T-cell (primary cell): ENCODE measurements at regions of chr12 and their contacts with region 1.

Region 1: DNA sequence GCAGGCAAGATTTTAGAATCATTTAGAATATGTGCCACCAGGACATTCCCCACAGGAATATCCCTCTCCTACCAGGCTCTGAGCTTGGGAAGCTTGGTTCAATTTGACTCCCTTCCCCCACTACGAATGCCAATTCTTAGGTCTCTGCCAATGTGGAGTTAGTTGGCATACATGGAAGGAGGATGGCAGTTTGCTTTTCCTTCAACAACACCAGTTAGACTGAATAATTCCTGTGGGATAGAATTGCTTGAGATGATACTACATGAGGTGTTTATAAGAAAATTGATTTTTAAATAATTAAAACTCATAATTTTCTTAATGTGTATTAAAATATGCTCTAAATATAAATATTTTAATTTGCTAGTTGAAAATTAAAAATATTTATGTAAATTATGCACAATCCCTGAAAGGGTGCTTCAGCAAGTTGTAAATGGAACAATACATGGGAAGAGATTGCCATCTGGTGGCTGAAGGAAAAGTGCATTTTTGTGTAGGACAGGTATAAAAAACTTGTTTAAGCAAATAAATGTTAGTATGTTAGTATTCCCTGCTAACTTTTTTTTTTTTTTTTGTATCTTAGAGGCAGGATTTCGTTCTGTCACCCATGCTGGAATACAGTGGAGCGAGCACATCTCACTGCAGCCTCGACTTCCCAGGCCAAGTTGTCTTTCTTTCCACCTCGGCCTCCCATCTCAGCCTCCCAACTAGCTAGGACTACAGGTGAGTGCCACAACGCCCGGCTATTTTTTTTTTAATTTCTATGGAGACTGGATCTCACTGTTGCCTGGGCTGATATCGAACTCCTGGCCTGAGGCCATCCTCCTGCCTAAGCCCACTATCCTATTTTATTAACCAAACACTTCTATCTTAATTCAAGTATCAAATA is 25.8 kb upstream of the STRAP start:
- DNase-seq: peak in 21 of 35 experiments; percentile 14 to 79 (median 36)
- ATAC-seq: peak in 3 of 4 experiments; percentile 45 to 64 (median 48)
- H3K4me3 ChIP-seq: no peak overlapping the region
- H3K4me3 Mint-ChIP-seq: no peak overlapping the region
- H3K27ac ChIP-seq: no peak overlapping the region
- H3K27ac Mint-ChIP-seq: no peak overlapping the region
- H3K4me1 ChIP-seq: no peaks in the 10 kb centered on the region
- H3K4me1 Mint-ChIP-seq: no peaks in the 10 kb centered on the region
- H3K27me3 ChIP-seq: no peaks in the 10 kb centered on the region
- H3K27me3 Mint-ChIP-seq: peaks cover 13 to 17% of the 10 kb centered on the region in 2 donors

Region 2: GRCh38 chr12:15590180-15590826 is 266.0 kb before region 1 on chr12:
- CTCF ChIA-PET with region 1: interaction called, 10 read pairs
- POLR2A ChIA-PET with region 1: no interaction called
- DNase-seq: peak in 32 of 35 experiments; percentile 4 to 79 (median 24)
- ATAC-seq: peak; percentile 90 to 98 (median 96)
- H3K4me3 ChIP-seq: peak overlapping the region in 1 of 2 donors; percentile 57
- H3K4me3 Mint-ChIP-seq: peak overlapping the region; percentile 67 to 85 (median 72)
- H3K27ac ChIP-seq: no peak overlapping the region
- H3K27ac Mint-ChIP-seq: peak overlapping the region; percentile 64 to 76
- H3K4me1 ChIP-seq: peaks cover 2 to 4% of the 10 kb centered on the region in 2 experiments
- H3K4me1 Mint-ChIP-seq: peaks cover 10% of the 10 kb centered on the region in 3 donors
- H3K27me3 ChIP-seq: no peaks in the 10 kb centered on the region
- H3K27me3 Mint-ChIP-seq: peaks cover 0 to 4% of the 10 kb centered on the region in 2 donors